Transverse colon (tissue), 4 donors: ENCODE measurements at regions of chr1 and their contacts with region 1.

Region 1: GRCh38 chr1:12208764-12209494 is 20.9 kb upstream of the VPS13D start:
- DNase-seq: peak; percentile 89
- H3K4me3 ChIP-seq: no peak overlapping the region
- H3K27ac ChIP-seq: no peak overlapping the region
- H3K4me1 ChIP-seq: peaks cover 0 to 9% (median 3%) of the 10 kb centered on the region in 4 donors
- H3K27me3 ChIP-seq: no peaks in the 10 kb centered on the region
- CTCF ChIP-seq: peak; percentile 92 to 98 (median 96)
- EP300 ChIP-seq: no peak
- POLR2A ChIP-seq: no peak

Region 2: DNA sequence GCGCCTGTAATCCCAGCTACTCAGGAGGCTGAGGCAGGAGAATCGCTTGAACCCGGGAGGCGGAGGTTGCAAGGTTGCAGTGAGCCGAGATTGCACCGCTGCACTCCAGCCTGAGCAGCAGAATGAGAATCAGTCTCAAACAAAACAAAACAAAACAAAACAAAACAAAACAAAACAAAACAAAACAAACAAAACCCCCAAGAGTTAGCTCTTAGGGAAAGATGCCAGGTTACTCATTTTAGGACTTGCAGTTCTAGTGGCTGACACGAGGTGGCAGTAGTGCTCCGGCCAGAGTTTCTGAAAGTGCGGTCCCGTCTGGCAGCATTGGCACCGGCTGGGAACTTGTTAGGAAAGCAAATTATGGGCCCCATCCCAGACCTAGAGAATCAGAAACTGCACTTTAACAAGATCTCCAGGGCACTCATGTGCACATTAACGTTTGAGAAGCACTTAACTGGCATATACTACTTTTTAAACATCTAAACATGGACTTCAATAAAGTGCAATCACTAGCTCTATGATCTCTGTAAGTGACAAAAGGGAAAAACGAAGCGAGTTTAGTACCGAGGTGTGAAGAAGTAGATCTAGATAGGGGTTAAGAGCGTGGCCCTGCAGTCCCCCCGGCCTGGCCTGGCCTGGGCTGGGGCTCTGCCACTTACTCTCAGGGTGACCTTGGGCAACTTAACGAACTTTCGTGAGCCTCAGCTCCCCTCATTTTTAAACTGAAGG is 84.1 kb before region 1 on chr1:
- in situ Hi-C with region 1: loop called (anchors 5 kb)
- intact Hi-C with region 1: loop called (anchors 2 kb)
- DNase-seq: peak; percentile 78
- H3K4me3 ChIP-seq: no peak overlapping the region
- H3K27ac ChIP-seq: no peak overlapping the region
- H3K4me1 ChIP-seq: peaks cover 0 to 10% (median 5%) of the 10 kb centered on the region in 4 donors
- H3K27me3 ChIP-seq: no peaks in the 10 kb centered on the region
- CTCF ChIP-seq: peak; percentile 96 to 99 (median 98)
- EP300 ChIP-seq: no peak
- POLR2A ChIP-seq: no peak